Tibial artery (tissue), 4 donors: ENCODE measurements at regions of chr7 and their contacts with region 1.

Region 1: DNA sequence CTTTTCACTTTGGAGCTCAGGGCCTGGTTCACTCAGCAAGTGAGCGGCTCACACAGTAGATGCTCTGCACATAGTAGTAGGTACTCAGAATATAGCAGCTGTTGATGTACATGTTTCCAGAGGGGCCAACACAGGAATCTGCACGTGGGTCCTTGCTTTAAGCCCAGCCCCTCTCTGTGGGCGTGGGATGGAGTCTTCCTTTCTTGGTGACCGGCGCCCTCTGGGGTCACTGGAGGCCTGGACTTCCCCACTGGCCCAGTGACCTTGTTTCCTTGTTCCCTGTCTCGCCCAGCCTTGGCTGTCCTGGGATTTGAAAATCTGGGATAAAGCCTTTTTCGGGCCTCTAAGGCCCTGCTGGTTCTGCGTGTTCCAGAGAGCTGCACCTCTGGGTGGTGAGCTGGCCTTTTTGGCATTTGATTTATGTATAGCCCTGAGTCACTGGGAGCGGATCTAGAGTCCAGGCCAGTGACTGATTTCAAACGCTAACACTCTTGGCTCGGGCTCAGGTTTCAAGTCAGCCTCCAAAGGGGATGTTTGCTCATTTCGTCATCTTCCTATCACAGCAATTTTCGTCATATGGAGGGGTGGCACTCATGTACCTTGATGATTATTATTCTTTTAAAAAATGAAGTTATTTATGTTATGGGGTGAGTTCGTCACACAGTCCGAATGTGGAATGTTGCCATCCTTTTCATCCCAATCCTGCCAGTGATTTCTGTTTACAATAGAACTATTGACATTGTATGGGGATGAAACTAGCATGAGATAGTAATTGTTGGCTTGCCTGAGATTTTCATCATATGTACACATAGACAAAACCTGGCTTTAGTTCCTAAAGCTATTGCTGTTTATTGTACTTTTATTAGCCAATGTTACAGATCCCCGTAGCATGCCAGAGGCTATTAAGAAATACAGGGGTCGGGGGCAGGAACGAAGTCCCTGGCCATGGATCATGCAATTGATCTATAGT is 65.5 kb downstream of the CUX1 start:
- DNase-seq: peak; percentile 94 to 96
- H3K4me3 ChIP-seq: no peak overlapping the region
- H3K27ac ChIP-seq: peak overlapping the region; percentile 78
- H3K4me1 ChIP-seq: peaks cover 5 to 72% (median 29%) of the 10 kb centered on the region in 4 donors
- H3K27me3 ChIP-seq: no peaks in the 10 kb centered on the region
- CTCF ChIP-seq: peak in 1 of 2 experiments; percentile 9

Region 2: DNA sequence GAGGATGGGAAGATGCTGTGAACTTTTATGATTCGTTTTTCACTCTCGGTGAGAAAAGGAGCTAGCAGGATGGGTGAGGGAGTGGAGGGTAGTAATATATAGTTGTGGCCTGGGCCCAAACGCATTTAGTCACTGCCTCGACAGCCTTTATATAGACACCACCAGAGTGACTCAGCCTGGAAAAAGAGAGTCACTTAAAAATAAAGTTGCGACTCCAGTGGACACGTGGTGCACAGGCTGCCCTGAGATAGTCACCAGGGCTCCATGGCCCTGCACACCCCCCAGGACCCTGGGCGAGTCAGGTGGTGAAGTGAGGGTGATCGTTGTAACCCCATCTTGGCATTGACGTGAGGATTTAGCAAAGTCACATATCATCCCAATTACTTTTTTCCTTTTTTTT is 41.3 kb after region 1 on chr7:
- intact Hi-C with region 1: loop called (anchors 5 kb)
- DNase-seq: peak; percentile 52 to 87
- H3K4me3 ChIP-seq: peak overlapping the region; percentile 34 to 41
- H3K27ac ChIP-seq: peak overlapping the region; percentile 89 to 92
- H3K4me1 ChIP-seq: peaks cover 0 to 34% (median 14%) of the 10 kb centered on the region in 4 donors
- H3K27me3 ChIP-seq: no peaks in the 10 kb centered on the region
- CTCF ChIP-seq: no peak

Region 3: DNA sequence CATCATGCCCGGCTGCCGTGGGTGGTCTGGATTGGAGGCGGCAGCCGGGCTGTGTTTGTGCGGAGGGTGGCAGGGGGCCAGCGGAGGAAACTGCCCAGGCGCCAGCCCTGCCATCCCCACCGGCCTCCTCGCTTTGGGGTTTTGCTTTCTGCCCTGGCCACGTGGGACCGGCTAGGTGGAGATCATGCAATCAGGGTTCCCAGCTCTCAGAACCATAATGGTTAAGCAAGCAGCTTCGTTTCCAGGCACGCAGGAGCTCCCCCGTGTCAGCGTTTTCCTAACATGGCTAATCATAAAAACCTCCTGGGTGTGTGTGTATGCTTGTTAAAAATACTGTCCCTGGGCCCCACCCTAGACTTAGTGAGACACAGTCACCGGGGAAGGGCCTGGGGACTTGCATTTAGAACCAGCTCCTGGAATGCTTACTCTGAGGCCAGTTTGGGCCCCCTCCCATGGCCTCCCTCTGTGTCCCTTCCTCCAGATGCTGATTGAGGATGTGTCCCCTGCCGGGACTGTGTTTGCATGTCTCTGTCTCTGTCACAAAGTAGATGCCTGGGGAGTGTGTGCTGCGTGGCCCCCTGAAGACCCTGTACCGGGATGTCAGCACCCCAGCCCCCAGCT is 53.8 kb after region 1 on chr7:
- intact Hi-C with region 1: loop called (anchors 2 kb)
- DNase-seq: peak in 1 of 2 donors; percentile 30
- H3K4me3 ChIP-seq: peak overlapping the region; percentile 45 to 52
- H3K27ac ChIP-seq: peak overlapping the region; percentile 80 to 81
- H3K4me1 ChIP-seq: peaks cover 12 to 56% (median 36%) of the 10 kb centered on the region in 4 donors
- H3K27me3 ChIP-seq: no peaks in the 10 kb centered on the region
- CTCF ChIP-seq: no peak